Heart right ventricle (tissue), 16 donors: ENCODE measurements at regions of chr1 and their contacts with region 1.

Region 1: DNA sequence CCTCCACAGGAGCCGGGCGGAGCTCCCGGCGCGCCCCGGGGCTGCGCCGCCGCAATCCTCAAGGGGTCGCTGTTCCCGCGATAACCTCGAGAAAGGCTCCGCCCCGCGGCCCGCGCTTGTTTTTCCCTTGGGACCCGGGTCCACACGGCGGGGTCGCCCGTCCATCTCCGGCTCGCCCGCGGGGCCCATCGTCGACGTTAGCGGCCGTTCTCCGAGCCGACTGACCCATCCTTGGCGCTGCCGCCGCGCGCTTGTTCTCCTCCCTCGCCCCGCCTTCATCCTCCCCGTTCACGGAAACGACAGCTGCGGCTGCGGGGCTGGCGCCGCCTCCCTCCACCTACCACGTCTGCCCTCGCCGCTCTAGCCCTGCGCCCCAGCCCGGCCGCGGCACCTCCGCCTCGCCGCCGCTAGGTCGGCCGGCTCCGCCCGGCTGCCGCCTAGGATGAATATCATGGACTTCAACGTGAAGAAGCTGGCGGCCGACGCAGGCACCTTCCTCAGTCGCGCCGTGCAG is at the start of gene SH3GLB1:
- DNase-seq: peak; percentile 88 to 92
- ATAC-seq: peak; percentile 92 to 97 (median 93)
- H3K4me3 ChIP-seq: peak within 1 kb of the TSS; percentile 72 to 98 (median 88)
- H3K27ac ChIP-seq: peak within 1 kb of the TSS; percentile 94 to 100 (median 99)
- H3K4me1 ChIP-seq: peaks cover 4 to 50% (median 47%) of the 10 kb centered on the region in 9 donors
- H3K27me3 ChIP-seq: no peaks in the 10 kb centered on the region
- CTCF ChIP-seq: peak; percentile 92 to 99 (median 96)
- total RNA-seq, gene SH3GLB1: 101 to 160 (median 126) TPM

Region 2: GRCh38 chr1:86380257-86380861 is 324.2 kb before region 1 on chr1:
- intact Hi-C with region 1: loop called in 6 of 10 experiments (anchors 10 kb)
- DNase-seq: no peak
- ATAC-seq: peak in 5 of 8 donors; percentile 58 to 77 (median 65)
- H3K4me3 ChIP-seq: peak overlapping the region in 4 of 10 donors; percentile 10 to 43 (median 22)
- H3K27ac ChIP-seq: peak overlapping the region in 1 of 10 donors; percentile 31
- H3K4me1 ChIP-seq: peaks cover 0 to 23% (median 0%) of the 10 kb centered on the region in 9 donors
- H3K27me3 ChIP-seq: no peaks in the 10 kb centered on the region
- CTCF ChIP-seq: peak; percentile 39 to 94 (median 82)

Region 3: GRCh38 chr1:86741947-86742572 is 37.5 kb after region 1 on chr1:
- intact Hi-C with region 1: loop called in 4 of 10 experiments (anchors 1 to 5 kb)
- DNase-seq: peak in 1 of 2 donors; percentile 29
- ATAC-seq: no peak
- H3K4me3 ChIP-seq: no peak overlapping the region
- H3K27ac ChIP-seq: no peak overlapping the region
- H3K4me1 ChIP-seq: peaks cover 0 to 18% (median 14%) of the 10 kb centered on the region in 9 donors
- H3K27me3 ChIP-seq: no peaks in the 10 kb centered on the region
- CTCF ChIP-seq: peak; percentile 16 to 81 (median 68)

Region 4: DNA sequence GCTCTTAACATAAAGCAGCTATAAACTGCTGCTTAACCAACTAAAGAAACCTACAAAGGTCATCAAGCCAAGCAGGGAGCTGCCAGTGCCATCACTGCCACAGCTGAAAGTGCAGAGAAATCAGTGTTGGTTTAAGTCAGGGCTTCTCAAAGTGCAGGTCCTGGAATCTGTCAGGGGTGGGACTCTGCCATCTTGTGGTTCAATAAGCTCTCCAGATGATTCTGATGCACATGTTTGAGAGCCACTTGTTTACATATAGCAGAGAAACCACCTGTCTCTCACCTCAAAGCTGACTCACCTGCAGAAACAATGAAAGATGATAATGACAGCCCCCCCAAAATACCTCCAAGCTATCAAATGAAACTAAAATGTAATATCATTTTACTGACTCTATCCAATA is 49.2 kb after region 1 on chr1:
- intact Hi-C with region 1: loop called in 1 of 10 experiments (anchors 5 kb)
- DNase-seq: no peak
- ATAC-seq: no peak
- H3K4me3 ChIP-seq: no peak overlapping the region
- H3K27ac ChIP-seq: no peak overlapping the region
- H3K4me1 ChIP-seq: peaks cover 0 to 3% (median 0%) of the 10 kb centered on the region in 9 donors
- H3K27me3 ChIP-seq: no peaks in the 10 kb centered on the region
- CTCF ChIP-seq: peak in 2 of 9 donors; percentile 11 to 16

Region 5: GRCh38 chr1:86913896-86914634 is 209.6 kb after region 1 on chr1 and contains the start of gene SELENOF:
- intact Hi-C with region 1: loop called in 3 of 10 experiments (anchors 10 kb)
- DNase-seq: peak; percentile 99 to 100
- ATAC-seq: peak; percentile 96 to 98 (median 98)
- H3K4me3 ChIP-seq: peak within 1 kb of the TSS; percentile 67 to 94 (median 91)
- H3K27ac ChIP-seq: peak within 1 kb of the TSS; percentile 80 to 97 (median 92)
- H3K4me1 ChIP-seq: peaks cover 0 to 42% (median 32%) of the 10 kb centered on the region in 9 donors
- H3K27me3 ChIP-seq: no peaks in the 10 kb centered on the region
- CTCF ChIP-seq: no peak
- total RNA-seq, gene SELENOF: 58.0 to 104 (median 73.4) TPM

Region 6: GRCh38 chr1:87007323-87007722 is 302.8 kb after region 1 on chr1:
- intact Hi-C with region 1: no loop called
- DNase-seq: no peak
- ATAC-seq: no peak
- H3K4me3 ChIP-seq: no peak overlapping the region
- H3K27ac ChIP-seq: no peak overlapping the region
- H3K4me1 ChIP-seq: peaks cover 0 to 4% (median 0%) of the 10 kb centered on the region in 9 donors
- H3K27me3 ChIP-seq: no peaks in the 10 kb centered on the region
- CTCF ChIP-seq: no peak